Activated T-helper 1 cell treated with anti-CD3 and anti-CD28 coated beads, Interleukin-12 subunit alpha, Interleukin-12 subunit beta, Interleukin-2, Interleukin-4 antibody, amounts not matched to agents 30 ng/mL and 10 ng/mL and 1 ng/mL, durations not matched to agents 14 hours and 24 hours and 36 hours (primary cell): ENCODE measurements at regions of chr22 and their contacts with region 1.

Region 1: DNA sequence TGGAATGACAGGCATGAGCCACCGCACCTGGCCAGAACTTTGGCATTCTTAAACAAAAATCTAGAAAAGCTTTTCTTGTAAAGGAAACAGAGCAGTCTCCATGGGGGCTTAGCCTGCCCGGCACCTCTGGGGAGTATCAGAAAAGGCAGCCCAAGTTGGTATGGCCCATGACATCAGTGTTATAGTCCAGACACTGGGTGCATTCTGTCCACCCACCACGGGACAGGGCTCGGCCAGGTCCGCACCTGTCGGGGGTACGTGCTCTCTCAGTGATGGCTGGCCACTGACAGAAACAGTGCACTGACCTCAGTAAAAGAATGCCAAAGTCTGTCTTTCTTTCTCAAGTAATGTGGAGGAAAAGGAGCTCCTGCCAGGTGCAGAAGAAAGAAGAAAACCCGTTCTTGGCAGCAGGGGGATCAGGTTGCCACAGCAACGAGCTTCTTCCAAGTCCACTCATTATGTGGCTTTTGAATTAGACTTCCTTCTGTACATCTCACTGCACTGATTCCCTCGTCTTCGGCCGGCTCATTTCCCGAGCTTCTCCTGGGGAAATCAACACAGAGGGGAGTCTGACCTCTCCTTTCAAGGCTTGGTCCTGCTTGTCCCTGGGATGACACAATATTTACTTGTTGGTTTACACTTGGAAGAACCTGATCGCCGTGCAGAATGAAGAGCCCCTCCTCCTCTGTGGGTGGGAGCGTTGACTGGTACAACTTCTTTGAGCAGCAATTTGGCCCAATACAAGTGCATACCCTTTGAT is 35.1 kb downstream of the MCHR1 start:
- DNase-seq: no peak
- H3K4me3 Mint-ChIP-seq: no peak overlapping the region
- H3K27ac Mint-ChIP-seq: no peak overlapping the region
- H3K4me1 Mint-ChIP-seq: peaks cover 22% of the 10 kb centered on the region
- H3K27me3 Mint-ChIP-seq: peaks cover 13% of the 10 kb centered on the region

Region 2: DNA sequence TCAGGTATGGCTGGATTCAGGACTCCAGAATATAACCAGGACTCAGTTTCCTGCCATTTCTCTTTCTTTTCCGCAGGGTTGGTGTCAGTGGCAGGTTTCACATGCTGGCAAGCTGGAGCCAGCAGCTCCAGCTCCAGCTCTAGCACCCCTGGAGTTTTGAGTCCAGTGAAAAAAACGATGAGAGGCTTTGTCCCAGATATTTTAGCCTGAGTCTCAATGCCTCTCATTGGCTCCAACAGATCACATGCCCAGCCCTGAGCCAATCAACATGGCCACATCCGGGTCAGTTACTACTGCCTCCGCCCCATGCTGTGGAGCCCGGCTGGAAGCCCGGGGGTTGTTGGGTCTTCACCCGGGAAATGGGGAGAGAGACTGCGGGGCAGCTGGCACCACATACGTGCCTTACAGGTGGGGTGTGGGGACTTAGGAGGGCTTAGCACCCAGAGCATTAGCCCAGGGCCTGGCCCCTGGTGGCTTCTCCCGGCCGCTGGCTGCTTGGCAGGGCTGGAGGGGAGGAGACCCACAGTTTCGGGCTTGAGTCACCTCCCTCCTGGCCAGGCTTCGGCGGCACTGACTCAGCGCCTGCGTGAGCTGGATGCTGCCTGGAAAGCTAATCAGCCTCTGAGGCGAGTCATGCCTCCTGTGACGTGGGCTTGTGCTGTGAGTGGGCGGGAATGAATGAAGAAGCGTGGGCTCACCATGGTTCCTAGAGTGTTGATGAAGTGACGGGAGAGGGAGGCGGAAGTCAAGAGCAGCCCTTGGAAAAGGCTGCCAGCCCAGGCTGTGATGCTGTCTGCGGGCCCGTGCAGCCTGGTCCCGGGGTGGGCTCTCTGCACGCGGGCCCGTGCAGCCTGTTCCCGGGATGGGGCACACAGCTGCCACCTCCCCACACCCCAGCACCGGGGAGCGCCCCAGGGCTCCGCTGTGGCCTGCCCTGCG is 62.5 kb before region 1 on chr22:
- intact Hi-C with region 1: loop called (anchors 1 kb)
- DNase-seq: peak; percentile 71
- H3K4me3 Mint-ChIP-seq: peak overlapping the region; percentile 72
- H3K27ac Mint-ChIP-seq: peak overlapping the region; percentile 91
- H3K4me1 Mint-ChIP-seq: peaks cover 32% of the 10 kb centered on the region
- H3K27me3 Mint-ChIP-seq: no peaks in the 10 kb centered on the region

Region 3: GRCh38 chr22:40728731-40729189 is 14.4 kb after region 1 on chr22:
- intact Hi-C with region 1: loop called (anchors 1 kb)
- DNase-seq: peak; percentile 53
- H3K4me3 Mint-ChIP-seq: peak overlapping the region; percentile 46
- H3K27ac Mint-ChIP-seq: peak overlapping the region; percentile 90
- H3K4me1 Mint-ChIP-seq: peaks cover 48% of the 10 kb centered on the region
- H3K27me3 Mint-ChIP-seq: no peaks in the 10 kb centered on the region

Region 4: GRCh38 chr22:40818747-40819598 is 104.6 kb after region 1 on chr22 and contains the start of gene SLC25A17:
- intact Hi-C with region 1: loop called (anchors 1 kb)
- DNase-seq: peak; percentile 82
- H3K4me3 Mint-ChIP-seq: peak within 1 kb of the TSS; percentile 87
- H3K27ac Mint-ChIP-seq: peak within 1 kb of the TSS; percentile 93
- H3K4me1 Mint-ChIP-seq: peaks cover 33% of the 10 kb centered on the region
- H3K27me3 Mint-ChIP-seq: no peaks in the 10 kb centered on the region
- total RNA-seq, gene SLC25A17: 29.4 and 34.0 TPM in 2 replicates